ENCODE measurements at regions of chr6 and their contacts with region 1.

Region 1: GRCh38 chr6:145814501-145815308 is at the start of gene FBXO30:
- DNase-seq: peak; percentile 84
- ATAC-seq: peak; percentile 91
- H3K4me3 ChIP-seq: peak within 1 kb of the TSS; percentile 84 to 98 (median 84)
- H3K27ac ChIP-seq: peak within 1 kb of the TSS; percentile 90
- H3K4me1 ChIP-seq: peaks cover 33% of the 10 kb centered on the region
- H3K27me3 ChIP-seq: no peaks in the 10 kb centered on the region; a peak in 2 of 5 replicates
- CTCF ChIP-seq: peak; percentile 31; the same call in 1 of the 2 replicates
- EP300 ChIP-seq: no peak
- POLR2A ChIP-seq: peak; percentile 84 to 89
- RAD21 ChIP-seq: peak; percentile 64
- total RNA-seq, gene FBXO30: 7.1 and 11.4 TPM in 2 replicates

Region 2: DNA sequence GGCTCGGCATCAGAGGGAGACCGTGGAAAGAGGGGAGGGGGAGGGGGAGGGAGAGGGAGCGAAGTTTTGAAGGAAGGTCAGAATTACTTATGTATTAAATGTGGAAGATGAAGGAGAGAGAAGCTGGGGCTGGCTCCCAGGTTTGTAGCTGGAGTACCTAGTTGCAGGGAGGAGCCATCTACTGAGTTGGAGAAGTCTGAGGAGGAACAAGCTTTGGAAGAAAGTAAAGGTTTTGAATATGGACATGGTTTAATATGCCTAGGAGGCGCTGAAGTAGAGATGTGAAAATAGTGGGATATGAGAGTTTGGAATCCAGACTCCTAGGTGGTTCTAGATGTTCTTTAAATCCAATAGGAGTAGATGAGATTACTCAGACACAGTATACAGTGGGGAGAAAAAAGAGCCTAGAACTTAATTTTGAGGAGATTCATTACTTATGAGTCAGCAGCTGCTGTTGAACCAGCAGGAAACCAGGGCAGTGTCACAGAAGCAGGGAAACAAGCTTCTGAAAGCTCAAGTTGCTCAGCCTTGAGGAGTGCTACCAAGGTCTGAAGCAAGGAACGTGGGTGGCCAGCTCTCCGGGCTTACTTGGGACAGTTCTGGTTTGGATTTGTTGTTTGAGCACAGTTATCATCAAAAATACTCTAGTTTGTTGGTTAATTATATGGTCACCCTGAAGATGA is 1380.3 kb before region 1 on chr6:
- CTCF ChIA-PET with region 1: no interaction called
- POLR2A ChIA-PET with region 1: no interaction called
- in situ Hi-C with region 1: no loop called
- intact Hi-C with region 1: loop called (anchors 5 kb)
- DNase-seq: no peak
- ATAC-seq: no peak
- H3K4me3 ChIP-seq: no peak overlapping the region
- H3K27ac ChIP-seq: no peak overlapping the region
- H3K4me1 ChIP-seq: peaks cover 15% of the 10 kb centered on the region
- H3K27me3 ChIP-seq: no peaks in the 10 kb centered on the region
- CTCF ChIP-seq: no peak
- EP300 ChIP-seq: no peak
- POLR2A ChIP-seq: no peak
- RAD21 ChIP-seq: no peak

Region 3: DNA sequence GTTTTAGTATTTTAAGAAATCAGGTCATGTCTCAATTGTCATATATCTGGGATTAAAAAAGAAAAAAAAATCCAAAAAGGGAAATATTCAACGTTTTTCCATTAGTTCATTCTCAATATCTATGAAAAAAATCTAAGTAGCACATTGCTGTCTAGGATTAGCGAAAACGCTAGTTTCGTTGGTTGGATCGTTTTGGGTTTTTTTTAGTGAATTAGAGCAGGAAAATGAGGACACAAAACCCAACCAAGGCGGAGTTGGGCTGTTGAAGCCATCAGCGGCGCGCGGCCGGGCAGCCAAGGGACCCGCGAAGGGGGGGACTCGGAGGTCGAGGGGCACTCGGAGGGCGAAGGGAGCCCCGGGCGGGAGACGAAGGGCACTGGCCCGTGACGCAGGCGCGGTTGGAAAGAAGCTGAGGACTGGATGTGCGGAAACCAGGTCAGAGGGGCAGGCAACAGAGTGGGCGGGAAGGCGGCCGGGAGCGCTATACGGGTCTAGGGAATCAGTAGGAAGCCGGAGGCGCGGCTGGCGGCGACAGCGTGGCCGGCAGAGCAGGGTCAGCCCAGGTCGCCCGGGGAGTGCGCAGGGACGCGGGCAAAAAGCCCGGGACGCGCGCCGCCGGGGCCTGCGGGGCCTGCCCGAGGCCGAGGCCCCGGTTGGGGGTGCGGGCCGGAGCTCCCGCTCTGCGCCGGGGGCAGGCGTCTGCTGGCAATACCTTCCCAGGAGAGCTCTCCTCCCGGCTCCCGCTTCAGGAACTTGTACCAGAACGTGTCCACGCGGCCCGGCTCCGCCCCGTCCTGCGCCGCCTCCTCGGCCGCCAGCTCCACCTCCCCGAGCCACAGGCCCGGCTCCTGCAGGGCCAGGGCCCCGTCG is 80.0 kb before region 1 on chr6:
- CTCF ChIA-PET with region 1: no interaction called
- POLR2A ChIA-PET with region 1: interaction called, 84 read pairs
- in situ Hi-C with region 1: loop called (anchors 5 kb)
- intact Hi-C with region 1: loop called (anchors 1 kb)
- DNase-seq: peak; percentile 94
- ATAC-seq: peak; percentile 93
- H3K4me3 ChIP-seq: peak overlapping the region; percentile 70 to 78 (median 75)
- H3K27ac ChIP-seq: peak overlapping the region; percentile 96
- H3K4me1 ChIP-seq: peaks cover 24% of the 10 kb centered on the region
- H3K27me3 ChIP-seq: no peaks in the 10 kb centered on the region
- CTCF ChIP-seq: 0 out of 2 replicates have a peak, but pooled peaks have one; percentile 20
- EP300 ChIP-seq: peak; percentile 42 to 50; a peak in 1 of 4 replicates
- POLR2A ChIP-seq: peak; percentile 79 to 93
- RAD21 ChIP-seq: peak; percentile 61

Region 4: GRCh38 chr6:145887969-145888368 is 73.3 kb after region 1 on chr6:
- CTCF ChIA-PET with region 1: no interaction called
- POLR2A ChIA-PET with region 1: no interaction called
- in situ Hi-C with region 1: no loop called
- intact Hi-C with region 1: loop called (anchors 5 kb)
- DNase-seq: no peak
- ATAC-seq: no peak; the same call in 2 of the 3 replicates
- H3K4me3 ChIP-seq: no peak overlapping the region
- H3K27ac ChIP-seq: no peak overlapping the region
- H3K4me1 ChIP-seq: peaks cover 21% of the 10 kb centered on the region
- H3K27me3 ChIP-seq: no peaks in the 10 kb centered on the region
- CTCF ChIP-seq: peak; percentile 47
- EP300 ChIP-seq: no peak
- POLR2A ChIP-seq: no peak
- RAD21 ChIP-seq: no peak

Region 5: DNA sequence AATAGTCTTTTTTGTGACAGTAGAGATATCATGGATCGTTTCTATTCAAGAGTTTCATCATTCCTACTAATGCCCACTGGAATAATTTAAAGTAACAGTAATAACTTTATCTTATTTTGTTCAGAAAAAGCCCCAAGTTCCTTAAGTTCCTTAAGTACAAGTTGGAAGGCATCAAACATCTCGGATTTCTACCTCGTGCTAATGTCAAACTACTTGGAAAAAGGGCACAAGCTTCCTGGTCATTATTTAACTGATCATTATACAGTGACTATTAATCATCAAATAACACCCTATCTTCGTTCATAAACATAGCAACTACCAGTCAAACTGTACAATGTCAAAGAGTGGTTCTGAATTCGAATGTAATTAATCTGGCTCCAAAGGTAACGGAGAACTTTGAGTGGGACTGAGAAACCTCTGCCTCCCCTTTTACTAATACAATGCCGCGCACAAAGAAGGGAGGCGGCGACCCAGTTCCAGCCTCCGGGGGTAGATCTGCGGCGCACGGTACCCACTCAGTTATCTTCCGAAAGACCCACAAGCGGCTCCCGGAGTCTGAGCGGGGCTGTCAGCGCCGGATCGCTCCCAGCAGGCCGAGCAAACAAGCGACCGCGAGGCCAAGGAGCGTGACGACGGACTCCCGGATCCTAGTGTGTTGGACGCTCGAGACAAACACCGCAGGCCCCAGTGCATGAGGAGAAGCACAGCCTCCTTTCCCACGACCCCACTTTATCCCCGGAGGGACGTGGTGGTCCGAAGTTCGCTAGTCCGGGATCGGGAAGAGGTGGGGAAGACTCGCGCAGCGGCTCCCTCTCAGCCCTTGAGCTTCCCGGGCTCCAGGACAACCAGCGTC is 148.7 kb after region 1 on chr6:
- CTCF ChIA-PET with region 1: no interaction called
- POLR2A ChIA-PET with region 1: interaction called, 17 read pairs
- in situ Hi-C with region 1: no loop called
- intact Hi-C with region 1: loop called (anchors 5 kb)
- DNase-seq: no peak
- ATAC-seq: peak; percentile 80
- H3K4me3 ChIP-seq: peak overlapping the region; percentile 64 to 87 (median 78)
- H3K27ac ChIP-seq: peak overlapping the region; percentile 88
- H3K4me1 ChIP-seq: peaks cover 31% of the 10 kb centered on the region
- H3K27me3 ChIP-seq: no peaks in the 10 kb centered on the region; a peak in 1 of 5 replicates
- CTCF ChIP-seq: 0 out of 2 replicates have a peak, but pooled peaks have one; percentile 3
- EP300 ChIP-seq: no peak
- POLR2A ChIP-seq: peak; percentile 70
- RAD21 ChIP-seq: no peak; the same call in 1 of the 2 replicates

Region 6: DNA sequence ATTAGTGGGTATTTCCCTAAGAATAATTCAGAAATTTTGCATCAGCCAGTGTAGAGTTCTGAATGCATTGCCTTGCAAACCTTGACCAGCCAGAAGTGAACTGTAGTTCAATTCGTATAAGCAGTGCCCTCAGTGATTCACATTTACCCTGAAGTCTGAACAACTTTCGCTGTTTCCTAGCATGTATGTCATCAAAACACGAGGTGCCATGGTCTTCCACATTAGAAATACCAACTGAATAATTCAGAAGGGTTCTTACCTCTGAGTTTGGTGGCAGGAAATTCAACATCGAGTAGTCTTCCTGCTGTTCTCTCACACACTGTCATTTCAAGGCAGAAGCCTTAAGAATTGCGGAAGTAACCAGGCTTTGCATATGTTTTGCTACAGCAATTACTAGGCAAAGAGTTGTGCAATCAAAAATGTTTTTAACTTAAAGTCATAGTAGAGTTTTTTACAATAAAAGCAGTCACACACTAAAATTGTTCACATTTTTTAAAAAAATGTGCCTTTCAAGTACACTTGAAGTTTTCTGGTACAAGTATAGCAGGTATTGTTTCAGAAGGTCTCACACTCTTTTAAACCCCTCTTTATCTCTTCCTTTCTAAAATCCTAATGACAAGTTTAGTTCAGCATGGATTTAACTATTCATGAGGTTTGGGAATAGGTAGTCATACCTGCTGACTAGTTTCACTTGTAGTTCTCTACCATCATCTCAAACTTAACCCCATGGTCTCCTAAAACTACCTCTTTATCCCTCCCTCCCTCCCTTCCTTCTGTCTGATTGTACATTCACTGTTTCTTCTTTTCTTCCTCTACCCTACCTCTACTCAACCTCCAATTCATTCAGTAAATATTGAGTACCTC is 1507.8 kb after region 1 on chr6:
- CTCF ChIA-PET with region 1: no interaction called
- POLR2A ChIA-PET with region 1: no interaction called
- in situ Hi-C with region 1: loop called (anchors 25 kb)
- intact Hi-C with region 1: no loop called
- DNase-seq: no peak
- ATAC-seq: no peak
- H3K4me3 ChIP-seq: no peak overlapping the region
- H3K27ac ChIP-seq: no peak overlapping the region
- H3K4me1 ChIP-seq: peaks cover 7% of the 10 kb centered on the region; the same call in 1 of the 2 replicates
- H3K27me3 ChIP-seq: no peaks in the 10 kb centered on the region
- CTCF ChIP-seq: no peak
- EP300 ChIP-seq: no peak
- POLR2A ChIP-seq: no peak
- RAD21 ChIP-seq: no peak